ENCODE measurements at regions of chr9 and their contacts with region 1.

Region 1: DNA sequence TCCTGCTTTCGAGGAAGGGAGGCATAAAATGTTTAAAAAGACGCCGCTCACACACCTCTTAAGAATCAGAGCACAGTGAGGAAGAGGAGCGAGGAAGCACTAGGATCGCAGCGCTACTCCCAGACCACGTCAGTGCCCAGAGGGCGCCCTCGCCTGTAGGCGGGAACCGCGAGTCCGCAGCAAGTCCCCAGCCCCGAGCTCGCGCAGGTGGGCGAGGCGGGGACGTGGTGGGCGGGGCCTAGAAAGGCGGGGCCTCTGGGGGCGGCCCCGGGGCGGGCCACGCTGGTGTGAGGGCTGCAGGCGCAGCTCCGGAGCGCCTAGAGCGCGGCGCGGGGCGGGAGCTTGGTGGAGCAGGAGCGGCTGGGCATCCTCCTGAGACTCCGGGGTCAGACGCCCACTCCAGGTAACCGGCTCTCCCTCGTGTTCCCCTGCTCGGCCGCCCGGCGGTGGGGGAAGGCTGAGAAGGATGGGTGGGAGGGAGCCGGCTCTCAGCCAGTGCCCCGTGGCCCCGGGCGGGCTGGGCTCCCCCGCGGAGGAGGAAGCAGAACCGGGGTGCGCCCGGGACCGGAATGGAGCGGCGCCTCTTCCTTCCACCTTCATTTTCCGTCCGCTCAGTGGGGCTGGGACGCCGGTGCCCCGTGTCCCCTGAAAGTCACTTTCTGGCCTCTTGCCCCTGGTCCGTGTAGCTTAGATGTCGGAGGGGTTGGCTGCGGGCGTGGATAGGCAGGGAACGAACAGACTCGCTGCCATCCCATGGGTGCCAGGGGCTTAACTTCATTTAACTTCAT is at the start of gene GCNT1:
- DNase-seq: peak; percentile 87 to 89 (median 89)
- H3K4me3 ChIP-seq: peak within 1 kb of the TSS; percentile 74 to 98 (median 95)
- H3K27ac ChIP-seq: peak within 1 kb of the TSS; percentile 40 to 80
- H3K4me1 ChIP-seq: peaks cover 30 to 65% (median 51%) of the 10 kb centered on the region in 4 experiments
- H3K27me3 ChIP-seq: no peaks in the 10 kb centered on the region

Region 2: DNA sequence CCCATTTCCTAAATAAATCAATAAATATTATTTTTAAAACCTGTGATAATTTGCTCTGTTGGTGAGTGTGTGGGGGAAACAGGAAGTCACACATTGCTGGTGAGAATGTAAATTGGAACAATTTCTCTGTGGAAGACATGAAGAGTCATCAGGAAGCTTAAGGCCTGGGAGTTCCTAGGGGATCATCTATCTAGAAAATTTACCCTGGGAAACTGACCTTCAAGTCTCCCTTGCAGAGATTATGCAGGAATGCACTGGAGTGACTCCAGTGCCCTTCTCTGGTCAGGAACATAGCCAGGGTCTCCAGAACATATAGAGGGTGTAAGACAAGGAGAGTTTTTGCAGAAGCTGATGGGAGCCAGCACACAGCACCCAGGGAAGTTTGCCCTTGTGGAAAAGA is 13.1 kb before region 1 on chr9:
- CTCF ChIA-PET with region 1: interaction called, 10 read pairs
- POLR2A ChIA-PET with region 1: no interaction called
- DNase-seq: no peak
- H3K4me3 ChIP-seq: no peak overlapping the region
- H3K27ac ChIP-seq: no peak overlapping the region
- H3K4me1 ChIP-seq: peaks cover 0 to 9% (median 3%) of the 10 kb centered on the region in 4 experiments
- H3K27me3 ChIP-seq: no peaks in the 10 kb centered on the region

Region 3: DNA sequence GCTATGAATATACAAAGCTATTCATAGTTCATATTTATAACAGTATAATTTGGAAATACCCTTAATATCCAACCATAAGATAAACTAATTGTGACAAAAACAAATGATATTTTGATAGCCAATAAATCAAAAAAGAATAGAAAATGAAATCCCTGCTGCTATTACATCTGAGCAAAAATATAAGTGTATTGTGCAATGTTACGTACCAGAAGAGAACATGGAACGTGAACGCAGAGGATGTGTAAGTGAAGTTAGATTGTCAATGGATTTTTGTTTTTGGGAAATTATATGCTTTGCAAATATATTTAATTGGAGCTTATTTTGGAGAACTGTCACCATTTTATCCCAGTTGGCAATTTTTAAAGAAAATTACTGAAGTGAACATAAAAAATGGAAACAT is 15.3 kb after region 1 on chr9:
- CTCF ChIA-PET with region 1: interaction called, 15 read pairs
- POLR2A ChIA-PET with region 1: interaction called, 3 read pairs
- DNase-seq: no peak
- H3K4me3 ChIP-seq: no peak overlapping the region
- H3K27ac ChIP-seq: no peak overlapping the region
- H3K4me1 ChIP-seq: peaks cover 12 to 26% (median 16%) of the 10 kb centered on the region in 4 experiments
- H3K27me3 ChIP-seq: no peaks in the 10 kb centered on the region

Region 4: DNA sequence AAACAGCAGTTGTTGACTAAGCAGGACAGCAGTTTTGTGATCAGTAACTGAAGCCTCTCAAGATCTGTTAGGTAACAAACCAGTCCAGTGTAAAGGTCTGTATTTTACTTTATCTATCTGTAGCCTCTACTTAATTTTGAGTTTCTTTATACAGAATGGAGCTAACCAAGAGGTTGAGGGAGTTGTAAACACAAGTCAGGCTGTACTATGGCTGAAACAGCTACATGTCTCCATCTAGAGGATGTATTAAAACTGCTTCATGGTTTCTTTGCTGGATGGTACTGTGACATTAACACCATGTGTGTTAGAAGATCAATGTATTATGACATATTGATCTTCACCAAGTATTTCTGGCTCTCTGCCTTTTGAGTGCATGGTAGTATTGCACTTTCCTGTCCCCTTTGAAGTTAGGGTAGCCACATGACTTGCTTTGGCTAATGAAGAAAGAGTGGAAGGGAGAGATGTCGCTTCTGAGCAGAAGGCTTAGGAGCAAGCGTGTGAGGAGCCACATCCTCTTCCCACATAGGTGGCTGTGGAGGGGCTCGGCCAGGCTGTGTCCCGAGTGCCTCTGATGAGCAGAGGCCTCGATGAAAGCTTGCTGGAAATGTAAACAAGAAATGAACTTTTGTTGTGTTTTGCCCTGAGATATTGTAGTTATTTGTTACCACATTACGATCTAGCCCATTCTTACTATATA is 199.6 kb after region 1 on chr9:
- CTCF ChIA-PET with region 1: interaction called, 171 read pairs
- POLR2A ChIA-PET with region 1: interaction called, 3 read pairs
- DNase-seq: peak; percentile 69 to 82 (median 82)
- H3K4me3 ChIP-seq: no peak overlapping the region
- H3K27ac ChIP-seq: no peak overlapping the region
- H3K4me1 ChIP-seq: peaks cover 35 to 58% (median 52%) of the 10 kb centered on the region in 4 experiments
- H3K27me3 ChIP-seq: no peaks in the 10 kb centered on the region

Measured in common myeloid progenitor, CD34-positive (primary cell).